AG04449 (cell line): ENCODE measurements at regions of chr14 and their contacts with region 1.

Region 1: GRCh38 chr14:70934502-70935134 is 27.4 kb downstream of the PCNX1 start:
- DNase-seq: peak; percentile 31
- H3K4me3 ChIP-seq: no peak overlapping the region
- CTCF ChIP-seq: no peak

Region 2: GRCh38 chr14:70955543-70956480 is 21.2 kb after region 1 on chr14:
- CTCF ChIA-PET with region 1: interaction called, 15 read pairs
- POLR2A ChIA-PET with region 1: no interaction called
- DNase-seq: no peak
- H3K4me3 ChIP-seq: no peak overlapping the region
- CTCF ChIP-seq: peak; percentile 62

Region 3: GRCh38 chr14:71021347-71022014 is 86.9 kb after region 1 on chr14:
- CTCF ChIA-PET with region 1: no interaction called
- POLR2A ChIA-PET with region 1: no interaction called
- DNase-seq: peak; percentile 29
- H3K4me3 ChIP-seq: no peak overlapping the region
- CTCF ChIP-seq: no peak

Region 4: GRCh38 chr14:71089971-71090370 is 155.4 kb after region 1 on chr14:
- CTCF ChIA-PET with region 1: no interaction called
- POLR2A ChIA-PET with region 1: no interaction called
- DNase-seq: peak; percentile 42
- H3K4me3 ChIP-seq: no peak overlapping the region
- CTCF ChIP-seq: no peak